ENCODE measurements at regions of chr3 and their contacts with region 1.

Region 1: DNA sequence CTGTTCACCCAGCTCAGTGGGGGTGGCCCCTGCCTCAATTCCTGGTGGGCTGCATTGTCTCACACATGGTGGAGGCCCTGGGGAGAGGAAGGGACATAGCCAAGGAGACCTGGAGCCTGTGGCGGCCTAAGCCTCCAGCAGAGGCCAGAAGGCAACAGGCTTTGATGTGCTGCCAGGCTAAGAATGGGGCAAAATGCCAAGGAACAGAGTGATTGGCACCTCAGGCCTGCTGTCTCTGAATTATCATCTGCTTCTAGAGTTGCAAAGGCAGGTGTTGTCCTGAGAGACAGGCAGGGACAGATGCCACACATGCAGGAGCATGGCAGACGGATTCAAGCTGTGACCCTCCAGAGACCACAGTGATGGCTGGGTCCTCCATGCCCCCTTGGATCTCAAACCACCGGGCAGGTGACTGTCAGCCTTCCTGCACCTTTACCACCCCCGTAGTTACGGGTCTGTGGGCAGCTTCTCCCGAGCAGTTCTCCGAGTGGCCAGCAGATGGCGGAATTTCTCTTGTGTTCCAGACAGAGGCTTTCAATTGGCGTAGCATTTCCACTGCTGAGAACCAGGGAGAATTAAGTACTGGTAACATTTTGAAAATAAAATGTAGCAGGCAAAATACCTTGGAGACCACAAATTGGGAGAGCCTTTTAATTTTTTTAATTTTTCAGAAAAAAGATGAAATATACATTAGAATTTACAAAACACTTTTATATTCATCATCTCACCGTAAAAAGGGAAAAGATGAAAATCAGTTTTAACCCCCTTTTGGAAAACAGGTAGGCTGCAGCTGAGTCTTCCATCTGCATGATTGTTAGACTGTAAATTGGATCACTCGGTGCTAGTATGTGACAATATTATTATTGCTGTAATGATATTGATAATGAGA is 525.5 kb upstream of the CFAP20DC start:
- DNase-seq: peak; percentile 92
- ATAC-seq: peak; percentile 90
- H3K4me3 Mint-ChIP-seq: no peak overlapping the region
- H3K27ac Mint-ChIP-seq: no peak overlapping the region
- H3K4me1 Mint-ChIP-seq: peaks cover 4% of the 10 kb centered on the region
- H3K27me3 Mint-ChIP-seq: no peaks in the 10 kb centered on the region
- CTCF ChIP-seq: peak; percentile 97

Region 2: DNA sequence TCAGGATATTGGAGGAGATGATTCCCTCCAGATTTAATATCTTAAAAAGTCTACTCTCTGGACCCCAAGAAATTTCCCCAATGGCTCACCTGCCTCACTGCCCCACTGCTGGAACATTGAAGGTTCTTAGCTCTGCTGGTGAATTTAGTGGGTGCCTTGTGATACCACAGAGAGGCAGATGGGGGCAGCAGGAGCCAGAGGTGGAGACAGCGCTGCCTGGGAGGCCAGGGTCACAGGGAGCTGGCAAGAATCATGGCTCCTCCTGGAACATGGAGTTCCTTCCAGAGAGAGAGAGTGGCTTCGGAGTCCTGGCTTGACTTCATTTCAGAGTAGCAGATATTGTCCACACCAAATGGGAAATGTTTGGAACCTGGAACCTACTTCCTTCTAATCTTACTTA is 262.0 kb before region 1 on chr3:
- CTCF ChIA-PET with region 1: interaction called, 10 read pairs
- POLR2A ChIA-PET with region 1: no interaction called
- intact Hi-C with region 1: no loop called
- DNase-seq: peak; percentile 67
- ATAC-seq: peak; percentile 85
- H3K4me3 Mint-ChIP-seq: no peak overlapping the region
- H3K27ac Mint-ChIP-seq: no peak overlapping the region
- H3K4me1 Mint-ChIP-seq: peaks cover 18% of the 10 kb centered on the region
- H3K27me3 Mint-ChIP-seq: no peaks in the 10 kb centered on the region
- CTCF ChIP-seq: peak; percentile 50

Region 3: GRCh38 chr3:59535791-59536221 is 39.6 kb before region 1 on chr3:
- CTCF ChIA-PET with region 1: no interaction called
- POLR2A ChIA-PET with region 1: no interaction called
- intact Hi-C with region 1: no loop called
- DNase-seq: no peak
- ATAC-seq: no peak
- H3K4me3 Mint-ChIP-seq: no peak overlapping the region
- H3K27ac Mint-ChIP-seq: no peak overlapping the region
- H3K4me1 Mint-ChIP-seq: peaks cover 7% of the 10 kb centered on the region
- H3K27me3 Mint-ChIP-seq: no peaks in the 10 kb centered on the region
- CTCF ChIP-seq: no peak

Region 4: DNA sequence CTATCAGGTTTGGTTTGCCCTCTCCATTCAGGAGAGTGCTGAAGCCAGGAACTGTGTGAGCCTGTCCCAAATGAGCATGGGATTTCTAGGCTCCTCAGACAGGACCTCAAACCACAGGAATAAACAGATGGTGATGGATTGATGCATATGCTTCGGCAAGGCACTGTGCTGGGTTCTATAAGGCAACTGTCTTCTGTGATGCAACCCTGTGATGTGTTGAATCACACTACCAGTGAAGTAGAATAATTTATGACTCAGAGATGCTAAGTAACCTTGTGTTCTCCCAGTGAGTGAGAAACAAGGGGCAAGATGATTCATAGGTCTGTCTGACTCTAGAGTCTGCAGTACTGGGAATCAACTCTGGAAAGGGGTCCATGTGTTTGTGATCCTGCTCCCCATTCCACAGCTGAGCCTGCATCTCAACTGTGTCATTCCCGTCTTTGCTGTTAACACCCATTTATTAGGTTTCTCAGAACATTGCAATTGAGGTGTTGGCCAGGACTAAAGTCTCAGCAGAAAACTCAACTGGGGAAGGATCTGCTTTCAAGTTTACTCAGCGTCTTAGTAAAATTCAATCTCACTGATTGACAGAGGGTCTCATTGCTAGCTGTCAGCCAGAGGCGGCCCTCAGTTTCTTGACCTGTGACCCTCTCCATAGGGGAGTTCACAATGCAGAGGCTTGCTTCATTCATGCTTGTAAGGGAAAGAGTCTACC is 15.5 kb before region 1 on chr3:
- CTCF ChIA-PET with region 1: interaction called, 17 read pairs
- POLR2A ChIA-PET with region 1: no interaction called
- intact Hi-C with region 1: no loop called
- DNase-seq: peak; percentile 62
- ATAC-seq: peak; percentile 97
- H3K4me3 Mint-ChIP-seq: no peak overlapping the region
- H3K27ac Mint-ChIP-seq: peak overlapping the region; percentile 93
- H3K4me1 Mint-ChIP-seq: peaks cover 26% of the 10 kb centered on the region
- H3K27me3 Mint-ChIP-seq: no peaks in the 10 kb centered on the region
- CTCF ChIP-seq: no peak

Region 5: GRCh38 chr3:59593380-59593779 is 18.0 kb after region 1 on chr3:
- CTCF ChIA-PET with region 1: interaction called, 17 read pairs
- POLR2A ChIA-PET with region 1: no interaction called
- intact Hi-C with region 1: no loop called
- DNase-seq: no peak
- ATAC-seq: no peak
- H3K4me3 Mint-ChIP-seq: no peak overlapping the region
- H3K27ac Mint-ChIP-seq: no peak overlapping the region
- H3K4me1 Mint-ChIP-seq: no peaks in the 10 kb centered on the region
- H3K27me3 Mint-ChIP-seq: peaks cover 3% of the 10 kb centered on the region
- CTCF ChIP-seq: no peak

Region 6: GRCh38 chr3:59809710-59810444 is 234.5 kb after region 1 on chr3:
- CTCF ChIA-PET with region 1: interaction called, 10 read pairs
- POLR2A ChIA-PET with region 1: no interaction called
- intact Hi-C with region 1: no loop called
- DNase-seq: no peak
- ATAC-seq: no peak
- H3K4me3 Mint-ChIP-seq: no peak overlapping the region
- H3K27ac Mint-ChIP-seq: no peak overlapping the region
- H3K4me1 Mint-ChIP-seq: peaks cover 11% of the 10 kb centered on the region
- H3K27me3 Mint-ChIP-seq: no peaks in the 10 kb centered on the region
- CTCF ChIP-seq: peak; percentile 29

Region 7: GRCh38 chr3:59857589-59858346 is 282.4 kb after region 1 on chr3:
- CTCF ChIA-PET with region 1: interaction called, 19 read pairs
- POLR2A ChIA-PET with region 1: no interaction called
- intact Hi-C with region 1: loop called (anchors 5 kb)
- DNase-seq: peak; percentile 93
- ATAC-seq: peak; percentile 97
- H3K4me3 Mint-ChIP-seq: no peak overlapping the region
- H3K27ac Mint-ChIP-seq: no peak overlapping the region
- H3K4me1 Mint-ChIP-seq: peaks cover 10% of the 10 kb centered on the region
- H3K27me3 Mint-ChIP-seq: no peaks in the 10 kb centered on the region
- CTCF ChIP-seq: peak; percentile 85